Activated CD4-positive, alpha-beta T cell treated with anti-CD3 and anti-CD28 coated beads for 36 hours (primary cell): ENCODE measurements at regions of chr10 and their contacts with region 1.

Region 1: GRCh38 chr10:119401671-119402395 is 140.7 kb downstream of the RGS10 start:
- DNase-seq: no peak
- ATAC-seq: no peak
- H3K4me3 Mint-ChIP-seq: no peak overlapping the region
- H3K27ac Mint-ChIP-seq: peak overlapping the region; percentile 13
- H3K4me1 Mint-ChIP-seq: peaks cover 7% of the 10 kb centered on the region
- H3K27me3 Mint-ChIP-seq: no peaks in the 10 kb centered on the region

Region 2: DNA sequence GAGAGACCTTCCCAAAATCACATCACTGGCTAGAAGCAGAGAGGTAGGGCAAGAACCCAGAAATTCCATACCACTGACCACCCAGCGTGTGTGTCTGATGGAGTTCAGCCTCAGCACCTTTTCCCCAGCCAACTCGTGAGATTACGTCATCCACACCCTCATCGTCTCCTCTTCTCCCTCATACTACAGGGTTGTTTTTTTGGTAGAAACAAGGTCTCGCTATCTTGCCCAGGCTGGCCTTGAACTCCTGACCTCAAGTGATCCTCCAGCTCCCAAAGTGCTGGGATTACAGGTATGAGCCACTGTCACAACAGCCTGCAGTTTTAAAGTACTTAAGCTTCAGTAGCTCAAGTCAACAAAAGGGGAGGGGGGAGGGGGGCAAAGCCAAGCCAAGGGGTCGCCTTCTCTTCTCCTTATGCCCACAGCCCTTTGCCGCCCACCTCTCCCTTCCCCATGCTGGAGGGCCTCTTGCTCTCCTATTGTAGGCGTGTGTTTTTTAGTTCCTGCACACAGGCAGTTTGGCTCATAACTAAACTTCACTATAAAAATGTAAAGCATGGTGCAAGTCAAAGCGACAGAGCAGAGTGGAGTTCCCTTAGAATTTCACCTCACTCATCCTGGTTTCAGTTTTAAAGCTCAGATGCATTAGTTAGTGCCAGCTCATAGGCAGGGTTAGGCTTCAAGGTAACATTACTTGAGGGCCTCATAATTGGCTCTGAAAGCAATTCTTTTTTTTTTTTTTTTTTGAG is 218.0 kb before region 1 on chr10:
- CTCF ChIA-PET with region 1: no interaction called
- POLR2A ChIA-PET with region 1: interaction called, 13 read pairs
- intact Hi-C with region 1: no loop called
- DNase-seq: peak; percentile 37
- ATAC-seq: peak; percentile 96
- H3K4me3 Mint-ChIP-seq: no peak overlapping the region
- H3K27ac Mint-ChIP-seq: peak overlapping the region; percentile 85
- H3K4me1 Mint-ChIP-seq: peaks cover 17% of the 10 kb centered on the region
- H3K27me3 Mint-ChIP-seq: no peaks in the 10 kb centered on the region